Heart right ventricle (tissue), 16 donors: ENCODE measurements at regions of chr4 and their contacts with region 1.

Region 1: DNA sequence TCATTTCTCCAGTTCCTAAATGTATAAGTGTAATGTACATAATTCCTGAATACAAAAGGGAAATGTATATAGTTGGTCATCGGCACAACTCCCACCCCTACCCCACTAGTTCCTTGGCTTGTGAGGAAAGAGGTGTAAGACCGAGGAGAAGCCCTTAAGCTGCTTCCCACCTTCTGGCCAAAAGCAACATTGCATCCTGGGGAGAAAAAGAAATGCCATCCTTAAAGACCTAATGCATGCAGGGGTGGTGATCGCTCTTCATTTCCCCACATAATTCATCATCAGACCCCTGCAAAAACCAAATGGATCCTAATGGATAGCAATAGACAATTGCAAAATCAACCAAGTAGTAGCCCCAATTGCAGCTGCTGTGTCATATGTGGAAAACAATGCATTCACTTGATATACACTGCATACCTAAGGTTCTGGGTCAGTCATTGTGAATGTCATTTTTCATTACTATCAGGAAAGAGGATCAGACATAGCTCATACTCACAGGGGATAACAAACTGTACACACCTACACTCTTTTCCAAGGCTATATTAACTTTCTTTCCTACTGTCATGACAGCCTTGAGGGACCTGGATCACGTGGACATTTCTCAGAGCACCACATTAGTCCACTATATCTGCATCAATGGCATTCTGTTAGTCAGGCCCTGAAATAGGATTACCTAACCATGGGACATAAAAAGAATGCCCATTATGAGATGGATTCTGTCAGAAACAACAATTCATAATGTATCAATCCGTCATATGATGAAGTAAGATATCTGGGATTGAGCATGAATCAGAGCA is 31.7 kb upstream of the NFXL1 start:
- DNase-seq: no peak
- ATAC-seq: no peak
- H3K4me3 ChIP-seq: no peak overlapping the region
- H3K27ac ChIP-seq: no peak overlapping the region
- H3K4me1 ChIP-seq: no peaks in the 10 kb centered on the region
- H3K27me3 ChIP-seq: no peaks in the 10 kb centered on the region
- CTCF ChIP-seq: no peak

Region 2: GRCh38 chr4:47391256-47391655 is 554.9 kb before region 1 on chr4:
- intact Hi-C with region 1: no loop called
- DNase-seq: no peak
- ATAC-seq: no peak
- H3K4me3 ChIP-seq: no peak overlapping the region
- H3K27ac ChIP-seq: no peak overlapping the region
- H3K4me1 ChIP-seq: peaks cover 0 to 3% (median 0%) of the 10 kb centered on the region in 9 donors
- H3K27me3 ChIP-seq: no peaks in the 10 kb centered on the region
- CTCF ChIP-seq: no peak

Region 3: DNA sequence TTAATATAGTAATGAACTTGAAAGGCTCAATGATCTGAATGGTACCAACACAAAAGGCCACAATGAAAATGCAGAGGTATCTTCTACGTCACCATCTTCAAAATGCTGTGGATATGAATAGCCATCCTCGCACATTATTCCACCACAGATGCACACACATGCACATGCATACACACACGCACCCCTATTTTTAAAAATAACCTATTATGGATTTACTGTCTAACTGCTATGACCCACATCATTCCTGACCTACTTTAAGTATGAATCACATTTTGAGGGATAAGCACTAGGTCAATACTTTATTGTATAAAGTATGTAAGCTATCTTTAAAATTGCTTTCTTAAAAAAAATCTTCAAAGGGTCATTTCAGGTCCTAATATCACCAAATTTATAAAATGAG is 83.8 kb before region 1 on chr4:
- intact Hi-C with region 1: no loop called
- DNase-seq: no peak
- ATAC-seq: no peak
- H3K4me3 ChIP-seq: no peak overlapping the region
- H3K27ac ChIP-seq: no peak overlapping the region
- H3K4me1 ChIP-seq: no peaks in the 10 kb centered on the region
- H3K27me3 ChIP-seq: no peaks in the 10 kb centered on the region
- CTCF ChIP-seq: no peak

Region 4: GRCh38 chr4:48008021-48008596 is 62.0 kb after region 1 on chr4:
- intact Hi-C with region 1: loop called in 1 of 10 experiments (anchors 10 kb)
- DNase-seq: no peak
- ATAC-seq: no peak
- H3K4me3 ChIP-seq: no peak overlapping the region
- H3K27ac ChIP-seq: no peak overlapping the region
- H3K4me1 ChIP-seq: peaks cover 0 to 3% (median 0%) of the 10 kb centered on the region in 9 donors
- H3K27me3 ChIP-seq: no peaks in the 10 kb centered on the region
- CTCF ChIP-seq: no peak